BJ (cell line): ENCODE measurements at regions of chr9 and their contacts with region 1.

Region 1: DNA sequence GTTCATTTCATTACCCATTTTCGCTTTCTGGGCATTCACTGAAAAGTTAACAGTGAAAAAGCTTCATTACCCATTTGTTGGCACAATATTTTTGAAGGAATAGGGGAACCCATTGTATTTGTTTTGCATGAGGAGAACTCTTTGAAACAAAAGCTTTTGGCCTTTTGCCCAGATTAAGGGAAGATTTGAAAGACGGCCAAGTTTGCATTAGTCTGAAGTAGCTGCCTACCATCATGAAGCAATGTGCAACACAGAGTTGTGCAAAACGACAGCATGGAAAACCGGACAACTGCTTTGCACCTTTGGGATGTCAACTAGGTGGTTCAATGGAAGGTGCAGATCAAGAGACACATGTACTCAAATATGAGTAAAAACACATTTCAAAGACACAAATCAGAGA is 84.9 kb downstream of the TRPM3 start:
- DNase-seq: no peak
- H3K4me3 ChIP-seq: no peak overlapping the region
- H3K27me3 ChIP-seq: no peaks in the 10 kb centered on the region
- CTCF ChIP-seq: no peak

Region 2: DNA sequence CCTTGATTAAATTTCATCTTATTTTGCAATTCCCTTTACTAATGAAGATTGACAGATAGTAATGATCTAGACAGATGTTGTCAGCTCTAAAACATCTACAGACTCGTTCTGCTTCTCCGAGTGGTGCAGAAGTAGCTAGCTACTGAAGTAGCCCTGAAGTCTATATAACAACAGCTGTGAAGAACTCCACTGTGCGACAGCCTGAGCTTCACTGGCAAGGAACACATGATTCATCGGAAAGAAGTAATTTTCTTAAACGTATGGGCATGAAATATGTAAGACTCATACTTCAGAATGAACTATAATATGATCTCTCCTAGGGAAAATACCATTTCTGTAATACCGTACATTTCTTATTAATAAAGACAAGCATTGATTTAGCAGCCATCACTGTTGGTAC is 11.3 kb before region 1 on chr9:
- CTCF ChIA-PET with region 1: interaction called, 10 read pairs
- POLR2A ChIA-PET with region 1: no interaction called
- DNase-seq: no peak
- H3K4me3 ChIP-seq: no peak overlapping the region
- H3K27me3 ChIP-seq: no peaks in the 10 kb centered on the region
- CTCF ChIP-seq: no peak